ENCODE measurements at regions of chr2 and their contacts with region 1.

Region 1: GRCh38 chr2:224585205-224586088 is at the start of gene CUL3:
- DNase-seq: peak; percentile 98 to 100 (median 99)
- H3K4me3 ChIP-seq: peak within 1 kb of the TSS; percentile 68 to 93
- H3K4me3 Mint-ChIP-seq: peak within 1 kb of the TSS; percentile 96 to 99 (median 97)
- H3K27ac ChIP-seq: peak within 1 kb of the TSS; percentile 75
- H3K27ac Mint-ChIP-seq: peak within 1 kb of the TSS; percentile 89 to 98 (median 96)
- H3K4me1 ChIP-seq: peaks cover 43% of the 10 kb centered on the region
- H3K4me1 Mint-ChIP-seq: peaks cover 23 to 49% (median 37%) of the 10 kb centered on the region in 4 donors
- H3K27me3 ChIP-seq: no peaks in the 10 kb centered on the region
- H3K27me3 Mint-ChIP-seq: no peaks in the 10 kb centered on the region
- total RNA-seq, gene CUL3: 83.4 to 85.3 TPM

Region 2: GRCh38 chr2:222655787-222656525 is 1929.5 kb before region 1 on chr2 and contains the start of gene FARSB:
- CTCF ChIA-PET with region 1: no interaction called
- POLR2A ChIA-PET with region 1: no interaction called
- intact Hi-C with region 1: loop called (anchors 5 kb)
- DNase-seq: peak; percentile 94 to 97 (median 96)
- H3K4me3 ChIP-seq: peak within 1 kb of the TSS; percentile 84 to 99
- H3K4me3 Mint-ChIP-seq: peak within 1 kb of the TSS; percentile 94 to 99 (median 96)
- H3K27ac ChIP-seq: peak within 1 kb of the TSS; percentile 91
- H3K27ac Mint-ChIP-seq: peak within 1 kb of the TSS; percentile 99 to 100 (median 100)
- H3K4me1 ChIP-seq: peaks cover 41% of the 10 kb centered on the region
- H3K4me1 Mint-ChIP-seq: peaks cover 24 to 57% (median 40%) of the 10 kb centered on the region in 4 donors
- H3K27me3 ChIP-seq: no peaks in the 10 kb centered on the region
- H3K27me3 Mint-ChIP-seq: no peaks in the 10 kb centered on the region
- total RNA-seq, gene FARSB: 11.2 to 11.8 TPM

Region 3: GRCh38 chr2:223957092-223957851 is 628.2 kb before region 1 on chr2 and contains the start of gene MRPL44:
- CTCF ChIA-PET with region 1: no interaction called
- POLR2A ChIA-PET with region 1: no interaction called
- intact Hi-C with region 1: loop called (anchors 1 kb)
- DNase-seq: peak; percentile 93 to 96 (median 95)
- H3K4me3 ChIP-seq: peak within 1 kb of the TSS; percentile 79 to 85
- H3K4me3 Mint-ChIP-seq: peak within 1 kb of the TSS; percentile 91 to 98 (median 96)
- H3K27ac ChIP-seq: peak within 1 kb of the TSS; percentile 80
- H3K27ac Mint-ChIP-seq: peak within 1 kb of the TSS; percentile 93 to 98 (median 96)
- H3K4me1 ChIP-seq: peaks cover 53% of the 10 kb centered on the region
- H3K4me1 Mint-ChIP-seq: peaks cover 43 to 75% (median 54%) of the 10 kb centered on the region in 4 donors
- H3K27me3 ChIP-seq: no peaks in the 10 kb centered on the region
- H3K27me3 Mint-ChIP-seq: no peaks in the 10 kb centered on the region
- total RNA-seq, gene MRPL44: 20.1 to 22.1 TPM

Region 4: GRCh38 chr2:224520064-224520463 is 65.4 kb before region 1 on chr2:
- CTCF ChIA-PET with region 1: no interaction called
- POLR2A ChIA-PET with region 1: interaction called, 14 read pairs
- intact Hi-C with region 1: no loop called
- DNase-seq: peak in 2 of 5 donors; percentile 15 to 41
- H3K4me3 ChIP-seq: no peak overlapping the region
- H3K4me3 Mint-ChIP-seq: peak overlapping the region in 5 of 8 donors; percentile 10 to 76 (median 30)
- H3K27ac ChIP-seq: no peak overlapping the region
- H3K27ac Mint-ChIP-seq: peak overlapping the region in 2 of 7 donors; percentile 43 to 54
- H3K4me1 ChIP-seq: peaks cover 72% of the 10 kb centered on the region
- H3K4me1 Mint-ChIP-seq: peaks cover 41 to 62% (median 56%) of the 10 kb centered on the region in 4 donors
- H3K27me3 ChIP-seq: no peaks in the 10 kb centered on the region
- H3K27me3 Mint-ChIP-seq: no peaks in the 10 kb centered on the region

Region 5: DNA sequence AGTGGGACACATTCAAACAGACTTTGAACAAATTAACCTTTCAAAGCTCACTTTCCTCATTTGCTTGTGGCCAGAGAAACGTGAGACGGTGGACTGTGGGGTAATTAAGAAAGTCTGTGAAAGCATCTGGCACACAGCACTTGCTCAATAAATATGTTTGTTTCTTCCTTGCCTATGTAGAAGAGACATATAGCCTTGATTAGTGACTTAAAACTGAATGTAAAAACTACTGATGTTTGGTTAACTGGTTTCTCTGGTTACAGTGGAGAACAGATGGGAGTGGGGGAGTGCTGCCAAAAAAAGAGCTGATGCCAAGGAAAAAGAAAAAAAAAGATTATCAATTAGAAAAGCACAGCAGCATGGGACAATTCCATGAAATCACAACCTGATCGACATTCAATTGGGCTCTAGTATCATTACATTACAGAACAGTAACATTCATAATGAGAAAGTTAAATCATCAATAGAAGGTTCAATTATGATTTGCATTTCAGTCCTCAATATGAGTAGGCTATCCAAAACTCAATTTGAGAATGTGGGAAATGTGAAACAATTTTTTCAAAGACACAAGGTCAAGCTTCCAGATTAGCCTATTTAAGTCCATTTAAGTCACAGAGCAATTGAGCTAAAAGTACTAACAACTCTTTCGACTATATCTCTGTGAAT is 15.0 kb before region 1 on chr2:
- CTCF ChIA-PET with region 1: interaction called, 3 read pairs
- POLR2A ChIA-PET with region 1: interaction called, 30 read pairs
- intact Hi-C with region 1: loop called (anchors 1 kb)
- DNase-seq: no peak
- H3K4me3 ChIP-seq: no peak overlapping the region
- H3K4me3 Mint-ChIP-seq: peak overlapping the region in 7 of 8 donors; percentile 18 to 76 (median 61)
- H3K27ac ChIP-seq: no peak overlapping the region
- H3K27ac Mint-ChIP-seq: peak overlapping the region in 3 of 7 donors; percentile 31 to 44 (median 43)
- H3K4me1 ChIP-seq: peaks cover 87% of the 10 kb centered on the region
- H3K4me1 Mint-ChIP-seq: peaks cover 63 to 89% (median 72%) of the 10 kb centered on the region in 4 donors
- H3K27me3 ChIP-seq: no peaks in the 10 kb centered on the region
- H3K27me3 Mint-ChIP-seq: no peaks in the 10 kb centered on the region

Region 6: DNA sequence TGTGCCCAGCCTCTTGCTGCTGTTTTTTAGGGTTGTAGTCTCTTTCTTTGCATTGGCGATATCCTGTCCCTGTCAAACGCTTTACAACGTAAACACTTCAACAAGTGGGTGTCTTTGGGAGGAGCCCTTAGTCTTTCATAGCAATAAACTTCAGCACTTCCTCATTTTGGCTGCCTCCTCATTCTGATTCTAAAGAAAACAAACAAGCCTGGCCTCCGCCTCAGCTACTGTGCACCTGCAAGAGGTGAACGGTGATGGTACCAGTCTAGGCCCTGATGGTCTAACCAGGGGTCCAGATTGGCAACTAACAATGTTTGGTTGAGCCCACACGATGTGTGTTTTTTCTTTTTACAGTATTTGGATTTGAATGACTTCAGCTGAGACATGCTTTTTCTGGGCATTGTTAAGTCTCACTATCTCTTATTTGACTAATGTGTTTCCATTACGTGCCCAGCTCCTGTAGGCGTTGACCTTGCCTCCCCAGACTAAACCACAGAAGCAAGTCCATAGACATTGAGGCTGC is 52.9 kb after region 1 on chr2:
- CTCF ChIA-PET with region 1: no interaction called
- POLR2A ChIA-PET with region 1: interaction called, 13 read pairs
- intact Hi-C with region 1: no loop called
- DNase-seq: peak in 4 of 5 donors; percentile 18 to 46 (median 32)
- H3K4me3 ChIP-seq: no peak overlapping the region
- H3K4me3 Mint-ChIP-seq: peak overlapping the region in 7 of 8 donors; percentile 7 to 76 (median 41)
- H3K27ac ChIP-seq: peak overlapping the region; percentile 10
- H3K27ac Mint-ChIP-seq: peak overlapping the region in 6 of 7 donors; percentile 81 to 90 (median 88)
- H3K4me1 ChIP-seq: peaks cover 13% of the 10 kb centered on the region
- H3K4me1 Mint-ChIP-seq: peaks cover 9 to 15% (median 10%) of the 10 kb centered on the region in 4 donors
- H3K27me3 ChIP-seq: no peaks in the 10 kb centered on the region
- H3K27me3 Mint-ChIP-seq: peaks cover 0 to 3% of the 10 kb centered on the region in 2 donors